ENCODE measurements at regions of chr1 and their contacts with region 1.

Region 1: GRCh38 chr1:229341774-229342655 is 832 bp downstream of the CCSAP start:
- DNase-seq: no peak
- H3K4me3 ChIP-seq: peak overlapping the region; percentile 80 to 98 (median 86)
- H3K27ac ChIP-seq: peak overlapping the region; percentile 89 to 95 (median 91)
- H3K4me1 ChIP-seq: peaks cover 8 to 31% (median 26%) of the 10 kb centered on the region in 4 donors
- H3K27me3 ChIP-seq: peaks cover 0 to 7% (median 0%) of the 10 kb centered on the region in 4 donors
- CTCF ChIP-seq: no peak
- EP300 ChIP-seq: no peak
- POLR2A ChIP-seq: no peak

Region 2: DNA sequence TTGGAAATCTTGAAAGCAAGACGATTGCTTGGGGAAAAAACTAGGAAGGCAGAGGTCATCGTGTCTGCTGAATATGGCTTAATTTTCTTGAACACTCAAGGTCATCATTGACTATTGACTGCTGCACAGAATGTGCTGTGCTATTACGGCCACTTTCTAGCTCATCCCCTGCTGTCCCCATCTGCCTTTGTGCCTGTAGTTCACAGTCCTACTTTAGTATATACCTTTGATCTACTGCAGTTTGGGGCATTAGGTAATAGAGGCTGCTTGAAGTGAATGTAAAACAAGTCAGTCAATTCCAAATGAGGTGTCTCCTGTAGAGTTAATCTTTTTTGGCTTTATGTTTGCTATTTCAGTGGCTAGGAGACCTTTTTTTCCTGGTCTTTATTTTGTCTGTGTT is 62.8 kb before region 1 on chr1:
- intact Hi-C with region 1: loop called (anchors 5 kb)
- DNase-seq: peak; percentile 26
- H3K4me3 ChIP-seq: no peak overlapping the region
- H3K27ac ChIP-seq: peak overlapping the region in 2 of 4 donors; percentile 10 to 85
- H3K4me1 ChIP-seq: peaks cover 17 to 93% (median 74%) of the 10 kb centered on the region in 4 donors
- H3K27me3 ChIP-seq: no peaks in the 10 kb centered on the region
- CTCF ChIP-seq: no peak
- EP300 ChIP-seq: no peak
- POLR2A ChIP-seq: no peak

Region 3: GRCh38 chr1:229479660-229480399 is 137.8 kb after region 1 on chr1:
- intact Hi-C with region 1: loop called (anchors 5 kb)
- DNase-seq: no peak
- H3K4me3 ChIP-seq: no peak overlapping the region
- H3K27ac ChIP-seq: no peak overlapping the region
- H3K4me1 ChIP-seq: peaks cover 0 to 16% (median 13%) of the 10 kb centered on the region in 4 donors
- H3K27me3 ChIP-seq: no peaks in the 10 kb centered on the region
- CTCF ChIP-seq: no peak
- EP300 ChIP-seq: no peak
- POLR2A ChIP-seq: no peak

Measured in esophagus muscularis mucosa (tissue), 4 donors.